SK-N-SH (cell line): ENCODE measurements at regions of chr11 and their contacts with region 1.

Region 1: DNA sequence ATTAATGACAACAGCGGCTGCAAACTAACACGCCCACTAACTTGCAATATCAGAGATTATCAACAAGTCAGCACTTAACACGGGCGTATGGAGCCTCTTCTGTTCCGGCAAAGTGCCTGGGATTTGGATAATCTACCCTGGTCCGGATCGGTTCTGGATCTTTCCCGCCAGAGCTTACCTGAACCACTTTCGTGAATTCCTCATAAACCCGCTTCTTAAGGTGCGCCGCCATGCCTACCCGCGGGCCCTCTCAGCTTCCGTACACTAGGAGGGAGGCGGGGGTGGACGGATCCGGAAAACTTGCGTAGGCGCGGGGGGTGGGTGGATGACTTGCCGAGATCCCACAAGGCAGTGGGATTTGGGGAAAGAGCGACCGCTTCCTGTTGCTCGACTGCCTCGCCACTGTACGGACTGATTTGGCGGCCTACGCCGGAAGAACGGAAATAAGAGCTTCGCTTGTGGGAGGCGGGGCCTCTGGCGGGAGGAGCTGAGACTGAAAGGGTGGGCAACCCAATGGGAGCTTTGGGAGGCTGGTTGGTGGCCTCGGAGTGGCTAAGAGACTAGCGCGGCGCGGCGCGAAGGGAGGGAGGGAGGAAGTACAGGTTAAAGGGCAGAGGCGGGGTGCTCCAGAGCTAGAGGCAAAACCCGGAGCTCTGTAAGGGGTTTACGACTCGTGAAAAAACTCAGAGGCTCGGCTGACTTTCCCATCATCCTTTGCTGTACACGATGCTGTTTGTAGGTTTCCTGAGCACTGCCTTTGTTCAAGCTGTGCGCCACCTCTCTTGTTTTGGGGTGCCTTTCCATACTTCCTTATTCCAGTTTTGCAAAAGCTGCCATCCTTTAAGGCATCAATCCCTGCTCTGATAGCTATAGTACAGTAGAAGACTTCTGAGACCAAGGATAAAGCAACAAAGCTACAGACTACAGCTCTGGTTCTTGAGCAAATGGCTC is at the start of gene INTS4:
- DNase-seq: peak; percentile 88
- H3K4me3 ChIP-seq: peak within 1 kb of the TSS; percentile 76 to 83
- H3K27ac ChIP-seq: peak within 1 kb of the TSS; percentile 85 to 89
- H3K4me1 ChIP-seq: peaks cover 11 to 14% of the 10 kb centered on the region in 2 experiments; a peak in 3 of 4 replicates
- H3K27me3 ChIP-seq: no peaks in the 10 kb centered on the region
- CTCF ChIP-seq: no peak
- EP300 ChIP-seq: peak; percentile 6 to 47; a peak in 3 of 4 replicates
- RAD21 ChIP-seq: peak; percentile 9
- polyA plus RNA-seq, gene INTS4: 23.0 and 30.0 TPM in 2 replicates

Region 2: DNA sequence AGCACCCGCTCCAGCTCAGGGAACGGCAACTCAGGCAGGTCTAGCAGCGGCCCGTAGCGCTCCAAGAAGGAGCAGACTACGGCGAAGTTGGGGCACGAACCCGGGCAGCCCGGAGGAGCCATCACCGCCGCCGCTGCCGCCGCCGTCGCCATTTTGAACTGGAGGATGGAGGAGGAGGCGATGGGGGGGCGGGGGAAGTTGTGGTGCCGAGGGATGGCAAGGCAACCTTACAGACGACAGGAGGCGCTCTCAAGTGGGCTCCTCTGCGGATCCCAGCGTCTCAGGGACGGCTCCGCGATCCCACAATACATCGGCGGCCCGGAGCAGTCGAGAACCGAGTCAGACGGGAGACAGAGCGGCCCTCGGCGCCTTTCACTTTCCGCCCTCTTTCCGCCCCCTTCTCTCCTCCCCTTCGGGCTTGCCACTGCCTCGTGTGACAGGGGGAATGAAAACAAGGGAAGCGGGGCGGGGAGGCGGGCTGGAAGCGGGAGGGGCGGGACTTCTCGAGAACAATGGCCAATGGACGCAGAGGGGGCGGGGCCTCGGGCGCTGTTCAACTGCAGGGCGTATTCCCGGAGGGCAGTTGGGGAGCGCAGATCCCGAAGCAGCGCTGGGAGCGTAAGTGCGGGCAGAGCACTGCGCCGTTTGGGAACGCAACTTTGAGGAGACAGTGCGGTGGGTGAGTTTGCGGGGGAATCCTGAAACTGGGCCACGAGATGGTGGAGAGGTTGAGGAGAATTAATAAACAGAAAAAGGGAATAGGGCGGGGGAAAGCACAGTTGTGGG is 173.9 kb before region 1 on chr11 and contains the starts of genes AAMDC and RSF1:
- CTCF ChIA-PET with region 1: interaction called, 4 read pairs
- POLR2A ChIA-PET with region 1: interaction called, 18 read pairs
- DNase-seq: peak; percentile 93
- H3K4me3 ChIP-seq: peak within 1 kb of the TSS; percentile 82 to 98
- H3K27ac ChIP-seq: peak within 1 kb of the TSS; percentile 77 to 95
- H3K4me1 ChIP-seq: peaks cover 5% of the 10 kb centered on the region in 2 experiments; a peak in 3 of 4 replicates
- H3K27me3 ChIP-seq: no peaks in the 10 kb centered on the region
- CTCF ChIP-seq: peak; percentile 73
- EP300 ChIP-seq: peak in 1 of 2 experiments; percentile 34; a peak in 1 of 4 replicates
- RAD21 ChIP-seq: peak; percentile 61
- polyA plus RNA-seq, gene AAMDC: 54.2 and 66.6 TPM in 2 replicates
- polyA plus RNA-seq, gene RSF1: 8.4 and 8.9 TPM in 2 replicates

Region 3: DNA sequence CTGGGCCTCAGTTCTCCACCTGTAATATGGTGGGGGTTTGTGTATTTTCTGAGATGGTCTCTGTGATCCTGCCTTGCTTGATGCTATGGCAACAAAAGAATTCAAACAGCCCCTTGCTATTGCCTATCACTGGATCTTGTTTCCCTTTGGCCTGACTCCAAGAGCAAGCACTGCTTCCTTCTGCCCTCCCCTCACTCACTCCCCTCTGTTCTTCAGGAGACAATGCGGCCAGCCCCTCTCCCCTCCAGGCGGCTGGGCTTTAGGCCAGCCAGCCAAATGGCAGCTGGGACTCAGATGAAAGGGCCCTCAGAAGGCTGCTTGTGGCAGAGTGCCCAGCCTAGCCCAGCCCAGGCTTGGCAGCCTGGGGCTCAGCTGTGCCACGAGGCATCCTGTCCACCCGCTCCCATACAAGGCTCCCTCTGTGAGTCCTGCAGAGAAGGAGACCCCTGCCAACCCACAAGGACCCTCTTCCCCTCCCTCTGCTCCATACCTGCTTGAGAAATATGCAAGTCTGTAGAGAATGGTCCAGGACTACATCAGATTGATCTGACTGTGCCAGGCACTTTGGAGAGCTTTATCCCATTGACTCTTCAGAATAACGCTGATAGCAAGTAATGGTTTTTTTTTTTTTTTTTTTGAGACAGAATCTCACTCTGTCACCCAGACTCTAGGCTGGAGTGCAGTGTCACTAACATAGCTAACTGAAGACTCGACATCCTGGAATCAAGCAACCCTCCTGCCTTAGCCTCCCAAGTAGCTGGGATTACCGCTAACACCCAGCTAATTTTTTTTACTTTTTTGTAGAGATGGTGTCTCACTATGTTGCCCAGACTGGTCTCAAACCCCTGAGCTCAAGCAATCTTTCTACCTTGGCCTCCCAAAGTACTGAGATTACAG is 36.0 kb after region 1 on chr11:
- CTCF ChIA-PET with region 1: interaction called, 5 read pairs
- POLR2A ChIA-PET with region 1: interaction called, 27 read pairs
- DNase-seq: peak; percentile 91
- H3K4me3 ChIP-seq: no peak overlapping the region
- H3K27ac ChIP-seq: peak overlapping the region; percentile 70 to 90
- H3K4me1 ChIP-seq: peaks cover 20 to 24% of the 10 kb centered on the region in 2 experiments; a peak in 3 of 4 replicates
- H3K27me3 ChIP-seq: no peaks in the 10 kb centered on the region
- CTCF ChIP-seq: no peak
- EP300 ChIP-seq: peak; percentile 61 to 68; a peak in 2 of 4 replicates
- RAD21 ChIP-seq: no peak; the same call in 1 of the 2 replicates

Region 4: GRCh38 chr11:78131956-78132355 is 137.3 kb after region 1 on chr11:
- CTCF ChIA-PET with region 1: no interaction called
- POLR2A ChIA-PET with region 1: no interaction called
- DNase-seq: no peak
- H3K4me3 ChIP-seq: no peak overlapping the region
- H3K27ac ChIP-seq: no peak overlapping the region
- H3K4me1 ChIP-seq: no peaks in the 10 kb centered on the region
- H3K27me3 ChIP-seq: no peaks in the 10 kb centered on the region
- CTCF ChIP-seq: no peak
- EP300 ChIP-seq: no peak
- RAD21 ChIP-seq: no peak